Breast epithelium (tissue), 4 donors: ENCODE measurements at regions of chr1 and their contacts with region 1.

Region 1: GRCh38 chr1:20416706-20417105 is 69.3 kb downstream of the CAMK2N1 start:
- DNase-seq: no peak
- H3K4me3 ChIP-seq: no peak overlapping the region
- H3K27ac ChIP-seq: no peak overlapping the region
- H3K4me1 ChIP-seq: peaks cover 0 to 4% of the 10 kb centered on the region in 2 donors
- H3K27me3 ChIP-seq: peaks cover 0 to 7% of the 10 kb centered on the region in 2 donors
- CTCF ChIP-seq: no peak
- POLR2A ChIP-seq: no peak

Region 2: GRCh38 chr1:21801100-21801499 is 1384.4 kb after region 1 on chr1:
- intact Hi-C with region 1: loop called (anchors 5 kb)
- DNase-seq: no peak
- H3K4me3 ChIP-seq: no peak overlapping the region
- H3K27ac ChIP-seq: no peak overlapping the region
- H3K4me1 ChIP-seq: no peaks in the 10 kb centered on the region
- H3K27me3 ChIP-seq: no peaks in the 10 kb centered on the region
- CTCF ChIP-seq: no peak
- POLR2A ChIP-seq: no peak